SK-N-SH (cell line): ENCODE measurements at regions of chr1 and their contacts with region 1.

Region 1: DNA sequence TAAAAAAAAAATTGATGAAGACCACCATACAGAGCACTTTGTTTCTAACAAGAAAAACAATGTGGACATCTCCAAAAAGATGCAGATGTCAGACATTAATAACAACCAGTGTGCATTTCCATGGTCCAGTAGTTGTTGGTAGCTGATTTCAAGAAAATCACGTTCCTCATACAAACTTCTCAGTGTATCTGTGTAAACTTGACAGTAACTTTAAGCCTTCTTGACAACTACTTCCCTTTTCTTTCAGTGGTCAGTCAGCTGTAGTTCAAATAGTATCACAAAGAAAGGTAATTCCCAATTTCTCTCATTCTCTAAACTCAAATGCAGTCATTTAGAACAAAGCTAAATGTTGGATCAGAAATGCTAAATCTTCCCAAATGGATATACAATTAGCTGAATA is 879.9 kb downstream of the AMY1C start:
- DNase-seq: no peak
- H3K4me3 ChIP-seq: no peak overlapping the region; a peak in 1 of 4 replicates
- H3K27ac ChIP-seq: no peak overlapping the region
- H3K4me1 ChIP-seq: no peaks in the 10 kb centered on the region; a peak in 1 of 4 replicates
- H3K27me3 ChIP-seq: no peaks in the 10 kb centered on the region
- CTCF ChIP-seq: no peak
- EP300 ChIP-seq: no peak
- RAD21 ChIP-seq: no peak

Region 2: DNA sequence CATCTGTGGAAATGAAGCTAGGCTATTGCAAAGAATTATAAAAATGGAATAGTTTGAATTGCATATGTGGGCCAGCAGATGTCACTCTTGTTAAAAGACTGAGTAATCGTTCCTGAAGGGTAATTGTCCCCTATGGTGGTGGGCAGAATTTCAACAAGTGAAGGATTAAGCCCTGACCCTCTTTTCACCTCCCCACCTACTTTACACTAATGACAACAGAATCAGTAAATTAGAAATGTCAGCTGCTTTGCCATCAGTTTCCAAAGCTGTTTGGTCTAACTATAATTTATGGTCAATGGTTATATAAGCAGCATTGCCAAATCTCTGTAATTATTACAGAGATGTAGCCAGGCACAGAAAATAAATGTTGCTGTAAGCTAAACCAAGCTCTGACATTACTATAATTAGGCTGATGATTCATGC is 18.7 kb after region 1 on chr1:
- CTCF ChIA-PET with region 1: interaction called, 11 read pairs
- POLR2A ChIA-PET with region 1: no interaction called
- DNase-seq: peak; percentile 57
- H3K4me3 ChIP-seq: no peak overlapping the region; a peak in 1 of 4 replicates
- H3K27ac ChIP-seq: no peak overlapping the region
- H3K4me1 ChIP-seq: no peaks in the 10 kb centered on the region
- H3K27me3 ChIP-seq: no peaks in the 10 kb centered on the region
- CTCF ChIP-seq: peak; percentile 59
- EP300 ChIP-seq: no peak
- RAD21 ChIP-seq: peak; percentile 74